ENCODE measurements at regions of chr17 and their contacts with region 1.

Region 1: GRCh38 chr17:64063766-64064224 is 43.4 kb upstream of the ICAM2 start:
- DNase-seq: no peak
- ATAC-seq: peak; percentile 58
- H3K4me3 Mint-ChIP-seq: no peak overlapping the region
- H3K27ac Mint-ChIP-seq: no peak overlapping the region
- H3K4me1 Mint-ChIP-seq: peaks cover 14% of the 10 kb centered on the region
- H3K27me3 Mint-ChIP-seq: no peaks in the 10 kb centered on the region
- CTCF ChIP-seq: no peak

Region 2: GRCh38 chr17:64073771-64074703 is 10.2 kb after region 1 on chr17:
- CTCF ChIA-PET with region 1: interaction called, 3 read pairs
- POLR2A ChIA-PET with region 1: interaction called, 8 read pairs
- intact Hi-C with region 1: loop called (anchors 1 kb)
- DNase-seq: no peak
- ATAC-seq: peak; percentile 90
- H3K4me3 Mint-ChIP-seq: no peak overlapping the region
- H3K27ac Mint-ChIP-seq: peak overlapping the region; percentile 64
- H3K4me1 Mint-ChIP-seq: peaks cover 32% of the 10 kb centered on the region
- H3K27me3 Mint-ChIP-seq: no peaks in the 10 kb centered on the region
- CTCF ChIP-seq: no peak

Region 3: DNA sequence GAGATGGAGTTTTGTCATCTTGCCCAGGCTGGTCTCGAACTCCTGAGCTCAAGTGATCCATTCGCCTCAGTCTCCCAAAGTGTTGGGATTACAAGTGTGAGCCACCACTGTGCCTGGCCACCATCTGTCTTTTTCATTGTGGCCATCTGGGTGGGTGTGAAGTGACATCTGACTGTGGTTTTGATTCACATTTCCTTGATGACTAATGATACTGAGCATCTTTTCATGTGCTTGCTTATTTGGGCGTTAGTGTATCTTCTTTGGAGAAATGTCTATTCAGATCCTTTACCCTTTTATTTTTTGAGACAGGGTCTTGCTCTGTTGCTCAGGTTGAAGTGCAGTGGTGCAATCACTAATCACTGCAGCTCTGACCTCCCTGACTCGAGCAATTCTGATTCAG is 120.0 kb after region 1 on chr17:
- CTCF ChIA-PET with region 1: no interaction called
- POLR2A ChIA-PET with region 1: no interaction called
- intact Hi-C with region 1: no loop called
- DNase-seq: no peak
- ATAC-seq: no peak
- H3K4me3 Mint-ChIP-seq: no peak overlapping the region
- H3K27ac Mint-ChIP-seq: no peak overlapping the region
- H3K4me1 Mint-ChIP-seq: no peaks in the 10 kb centered on the region
- H3K27me3 Mint-ChIP-seq: no peaks in the 10 kb centered on the region
- CTCF ChIP-seq: no peak